Heart right ventricle (tissue), 16 donors: ENCODE measurements at regions of chr7 and their contacts with region 1.

Region 1: DNA sequence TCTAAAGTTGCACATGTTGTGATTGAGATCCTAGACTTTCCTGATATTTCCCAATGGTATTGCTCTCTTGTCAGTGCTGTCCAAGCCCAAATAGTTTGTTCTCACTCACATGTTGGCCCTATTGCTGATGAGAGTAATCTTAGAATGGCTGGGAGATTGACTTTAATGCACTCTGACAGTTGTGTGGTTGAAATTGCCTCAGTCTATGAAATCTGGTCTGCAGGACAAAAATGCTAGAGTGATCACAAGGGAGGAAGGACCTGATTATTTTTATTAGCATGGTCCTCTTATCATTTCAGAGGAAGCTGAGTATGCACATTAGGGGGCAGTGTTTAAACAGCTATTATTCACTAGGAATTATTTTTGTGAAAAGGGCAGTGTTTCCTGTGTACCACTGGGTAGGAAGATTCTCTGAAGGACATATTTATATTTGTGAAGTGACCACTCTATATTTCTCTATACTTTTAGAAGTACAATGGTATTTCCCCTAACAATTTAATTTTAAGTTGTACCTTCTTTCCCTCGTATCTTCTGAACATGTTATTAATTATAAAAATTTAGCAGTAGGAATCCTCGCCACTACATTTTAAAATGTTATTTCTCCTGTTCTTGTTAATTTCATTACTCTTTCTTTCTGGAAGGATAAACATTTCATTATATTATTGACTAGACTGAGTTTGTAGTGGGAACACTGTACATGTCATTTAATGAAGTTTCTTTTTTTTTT is 64.4 kb downstream of the SUGCT start:
- DNase-seq: no peak
- ATAC-seq: peak in 4 of 8 donors; percentile 31 to 51 (median 42)
- H3K4me3 ChIP-seq: no peak overlapping the region
- H3K27ac ChIP-seq: no peak overlapping the region
- H3K4me1 ChIP-seq: peaks cover 0 to 14% (median 0%) of the 10 kb centered on the region in 9 donors
- H3K27me3 ChIP-seq: no peaks in the 10 kb centered on the region
- CTCF ChIP-seq: peak in 6 of 9 donors; percentile 25 to 50 (median 34)

Region 2: DNA sequence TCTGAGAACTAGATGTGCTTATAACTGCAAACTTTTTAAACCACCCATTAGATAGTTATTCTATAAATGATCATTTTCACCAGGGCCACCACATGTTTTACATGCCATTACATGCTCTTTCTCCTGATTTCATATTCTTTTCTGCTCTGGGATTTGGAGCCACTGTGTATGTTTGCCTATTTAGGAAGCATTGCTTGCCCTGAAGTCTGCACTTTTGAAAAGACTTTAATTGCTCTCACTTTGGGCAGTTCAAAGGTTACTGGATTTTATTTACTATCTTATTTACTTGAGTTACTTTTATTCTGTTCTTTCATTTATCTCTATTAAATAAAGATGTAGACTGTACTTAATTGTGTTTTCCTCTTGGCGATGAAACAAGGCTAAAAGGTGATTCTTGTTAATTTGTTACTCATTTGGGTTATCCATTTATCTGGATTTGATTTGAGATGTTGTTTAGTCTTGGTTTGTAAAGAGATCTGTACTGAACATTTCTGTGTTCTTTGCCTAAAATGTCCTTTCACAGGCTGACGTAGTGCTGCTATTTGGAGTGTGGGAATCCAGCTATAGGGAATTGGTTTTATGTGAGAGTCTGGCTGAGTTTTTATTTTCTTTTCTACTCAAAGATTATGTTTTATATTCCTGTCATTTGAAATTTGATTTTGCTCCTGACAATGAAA is 24.4 kb after region 1 on chr7:
- intact Hi-C with region 1: no loop called
- DNase-seq: no peak
- ATAC-seq: no peak
- H3K4me3 ChIP-seq: no peak overlapping the region
- H3K27ac ChIP-seq: no peak overlapping the region
- H3K4me1 ChIP-seq: no peaks in the 10 kb centered on the region
- H3K27me3 ChIP-seq: no peaks in the 10 kb centered on the region
- CTCF ChIP-seq: no peak

Region 3: GRCh38 chr7:41538810-41539724 is 1339.8 kb after region 1 on chr7:
- intact Hi-C with region 1: loop called in 1 of 10 experiments (anchors 10 kb)
- DNase-seq: no peak
- ATAC-seq: no peak
- H3K4me3 ChIP-seq: no peak overlapping the region
- H3K27ac ChIP-seq: no peak overlapping the region
- H3K4me1 ChIP-seq: no peaks in the 10 kb centered on the region
- H3K27me3 ChIP-seq: no peaks in the 10 kb centered on the region
- CTCF ChIP-seq: no peak